ENCODE measurements at regions of chr17 and their contacts with region 1.

Region 1: DNA sequence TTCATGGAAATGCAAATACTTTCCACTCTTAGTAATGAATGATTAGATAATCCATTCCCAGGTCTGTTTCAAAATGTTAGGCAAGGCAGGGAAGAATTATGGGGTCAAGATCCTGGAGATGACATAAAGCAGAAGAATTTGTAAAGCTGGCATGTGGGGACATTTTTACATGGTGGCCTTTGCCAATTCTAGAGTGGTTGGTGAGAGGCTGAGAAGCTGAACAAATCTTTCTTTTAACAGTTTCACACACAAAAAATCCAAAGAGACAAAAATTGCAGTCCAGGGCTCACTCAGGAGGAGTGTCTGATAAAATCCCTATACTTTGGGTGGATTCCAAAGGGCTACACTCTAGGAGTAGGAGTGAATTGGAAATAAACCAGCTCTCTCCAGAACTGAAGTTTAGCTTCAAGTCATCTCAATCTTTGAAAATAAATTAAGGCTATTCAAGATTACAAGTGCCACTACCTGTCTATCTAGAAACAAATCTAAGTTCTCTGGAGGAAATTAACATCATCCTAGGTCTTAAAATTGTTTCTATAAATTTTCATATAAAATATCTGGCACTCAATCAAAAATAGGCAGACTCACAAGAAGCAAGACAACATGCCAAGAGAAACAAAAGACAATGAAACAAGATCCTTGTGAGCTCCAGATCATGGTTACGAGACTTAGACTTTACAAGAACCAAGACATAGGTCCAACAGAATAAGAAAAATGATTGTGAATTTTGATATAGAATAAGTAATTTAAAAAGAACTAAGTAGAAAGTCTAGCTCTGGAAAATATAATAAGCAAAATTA is 113.0 kb upstream of the AXIN2 start:
- DNase-seq: no peak
- ATAC-seq: no peak
- H3K4me3 ChIP-seq: no peak overlapping the region
- H3K27ac ChIP-seq: no peak overlapping the region
- H3K4me1 ChIP-seq: peaks cover 24% of the 10 kb centered on the region
- H3K27me3 ChIP-seq: no peaks in the 10 kb centered on the region
- CTCF ChIP-seq: no peak
- EP300 ChIP-seq: no peak
- POLR2A ChIP-seq: no peak
- RAD21 ChIP-seq: no peak

Region 2: DNA sequence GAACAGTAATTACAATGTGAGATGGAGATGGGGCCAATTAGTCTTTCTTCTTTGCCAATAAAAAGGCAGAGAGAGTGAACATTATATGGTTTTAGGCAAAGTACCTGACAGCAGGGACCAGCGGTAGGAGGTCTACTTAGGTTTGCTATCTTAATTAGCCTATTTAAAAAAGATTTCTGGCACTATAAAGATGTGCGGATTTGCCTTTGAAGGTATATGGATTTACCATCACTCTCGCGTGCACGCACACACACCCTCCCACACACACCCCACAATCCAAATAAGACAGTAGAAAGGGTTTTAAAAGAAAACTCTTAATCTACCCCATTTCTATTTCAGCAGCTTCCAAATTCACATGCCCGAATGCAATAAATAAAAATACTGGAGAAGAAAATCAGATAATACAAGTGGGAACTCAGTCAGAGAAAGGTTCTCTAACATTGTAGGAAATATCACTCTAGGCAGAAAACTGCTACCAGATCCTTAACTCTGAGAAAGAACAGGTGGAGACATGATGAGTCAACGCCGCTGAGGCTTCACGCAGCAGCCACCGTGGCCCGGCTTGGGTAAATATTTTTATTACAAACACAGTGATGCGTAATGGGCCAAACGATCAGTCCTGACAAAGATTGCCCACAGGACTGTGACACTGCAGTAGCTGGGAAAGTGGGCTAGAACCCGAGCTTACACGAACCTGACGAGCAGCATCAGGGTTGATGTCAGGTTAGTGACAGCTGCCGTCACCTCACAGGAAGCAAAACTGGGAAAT is 46.4 kb before region 1 on chr17:
- CTCF ChIA-PET with region 1: no interaction called
- POLR2A ChIA-PET with region 1: interaction called, 3 read pairs
- in situ Hi-C with region 1: no loop called
- intact Hi-C with region 1: loop called (anchors 5 kb)
- DNase-seq: peak; percentile 91
- ATAC-seq: peak; percentile 97
- H3K4me3 ChIP-seq: peak overlapping the region in 1 of 3 experiments; percentile 12; a peak in 1 of 6 replicates
- H3K27ac ChIP-seq: peak overlapping the region; percentile 3
- H3K4me1 ChIP-seq: peaks cover 38% of the 10 kb centered on the region
- H3K27me3 ChIP-seq: no peaks in the 10 kb centered on the region
- CTCF ChIP-seq: no peak
- EP300 ChIP-seq: peak in 1 of 2 experiments; percentile 80; a peak in 2 of 4 replicates
- POLR2A ChIP-seq: no peak
- RAD21 ChIP-seq: no peak

Region 3: GRCh38 chr17:65656382-65657250 is 17.8 kb before region 1 on chr17:
- CTCF ChIA-PET with region 1: no interaction called
- POLR2A ChIA-PET with region 1: interaction called, 10 read pairs
- in situ Hi-C with region 1: no loop called
- intact Hi-C with region 1: no loop called
- DNase-seq: peak; percentile 80
- ATAC-seq: peak; percentile 75
- H3K4me3 ChIP-seq: no peak overlapping the region
- H3K27ac ChIP-seq: peak overlapping the region; percentile 1
- H3K4me1 ChIP-seq: peaks cover 44% of the 10 kb centered on the region
- H3K27me3 ChIP-seq: no peaks in the 10 kb centered on the region
- CTCF ChIP-seq: no peak
- EP300 ChIP-seq: peak in 1 of 2 experiments; percentile 79; a peak in 2 of 4 replicates
- POLR2A ChIP-seq: no peak
- RAD21 ChIP-seq: no peak

Region 4: GRCh38 chr17:65690626-65691310 is 16.3 kb after region 1 on chr17:
- CTCF ChIA-PET with region 1: no interaction called
- POLR2A ChIA-PET with region 1: interaction called, 4 read pairs
- in situ Hi-C with region 1: no loop called
- intact Hi-C with region 1: loop called (anchors 2 kb)
- DNase-seq: peak; percentile 95
- ATAC-seq: peak; percentile 88
- H3K4me3 ChIP-seq: peak overlapping the region in 2 of 3 experiments; percentile 6 to 30; a peak in 1 of 6 replicates
- H3K27ac ChIP-seq: peak overlapping the region; percentile 62
- H3K4me1 ChIP-seq: peaks cover 51% of the 10 kb centered on the region
- H3K27me3 ChIP-seq: no peaks in the 10 kb centered on the region
- CTCF ChIP-seq: peak; percentile 37
- EP300 ChIP-seq: peak in 1 of 2 experiments; percentile 99; a peak in 2 of 4 replicates
- POLR2A ChIP-seq: no peak
- RAD21 ChIP-seq: no peak

Measured in HepG2 (cell line).